CD4-positive, alpha-beta memory T cell (primary cell): ENCODE measurements at regions of chr10 and their contacts with region 1.

Region 1: DNA sequence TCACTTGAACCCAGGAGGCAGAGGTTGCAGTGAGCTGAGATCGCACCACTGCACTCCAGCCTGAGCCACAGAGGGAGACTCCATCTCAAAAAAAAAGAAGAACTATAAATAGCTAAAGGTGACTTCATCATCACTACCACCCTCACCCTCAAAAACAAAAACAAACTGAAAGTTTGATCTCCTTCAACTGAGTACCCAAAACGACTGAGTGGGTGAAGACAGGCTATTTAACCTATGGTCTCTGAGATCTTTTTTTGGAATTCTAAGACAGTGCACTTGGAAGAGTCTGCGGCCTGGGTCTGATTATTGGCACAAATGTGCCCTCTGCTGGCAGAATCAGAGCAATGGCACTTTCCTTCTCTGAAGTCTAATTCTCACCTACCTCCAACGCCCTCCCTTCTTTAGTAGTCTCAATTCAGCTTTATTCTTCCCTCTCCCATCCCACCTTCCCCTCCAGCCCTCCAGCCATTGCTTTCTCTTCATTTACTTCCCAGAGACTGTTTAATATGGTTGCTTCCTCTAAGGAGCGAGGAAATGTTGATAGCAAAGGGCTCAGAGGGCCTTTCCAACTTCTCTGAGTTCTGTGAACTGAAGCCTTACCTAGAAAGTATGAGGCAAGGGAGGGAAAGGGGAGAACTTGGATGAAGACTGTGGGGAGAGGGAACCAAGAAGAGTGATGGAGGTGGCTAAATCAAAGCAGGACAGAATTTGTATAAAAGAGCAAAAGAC is 2.9 kb upstream of the MYOZ1 start:
- DNase-seq: peak; percentile 49 to 65 (median 63)
- H3K4me3 ChIP-seq: no peak overlapping the region
- H3K4me3 Mint-ChIP-seq: peak overlapping the region in 3 of 8 donors; percentile 7 to 26 (median 21)
- H3K27ac ChIP-seq: no peak overlapping the region
- H3K27ac Mint-ChIP-seq: peak overlapping the region; percentile 3 to 82 (median 49)
- H3K4me1 ChIP-seq: no peaks in the 10 kb centered on the region
- H3K4me1 Mint-ChIP-seq: peaks cover 3 to 8% (median 7%) of the 10 kb centered on the region in 4 donors
- H3K27me3 ChIP-seq: no peaks in the 10 kb centered on the region
- H3K27me3 Mint-ChIP-seq: peaks cover 3 to 14% of the 10 kb centered on the region in 2 donors

Region 2: GRCh38 chr10:73263948-73264347 is 380.2 kb before region 1 on chr10:
- CTCF ChIA-PET with region 1: interaction called, 5 read pairs
- POLR2A ChIA-PET with region 1: no interaction called
- intact Hi-C with region 1: loop called (anchors 1 kb)
- DNase-seq: peak in 3 of 5 donors; percentile 6 to 12 (median 8)
- H3K4me3 ChIP-seq: no peak overlapping the region
- H3K4me3 Mint-ChIP-seq: no peak overlapping the region
- H3K27ac ChIP-seq: no peak overlapping the region
- H3K27ac Mint-ChIP-seq: peak overlapping the region in 1 of 7 donors; percentile 66
- H3K4me1 ChIP-seq: no peaks in the 10 kb centered on the region
- H3K4me1 Mint-ChIP-seq: peaks cover 0 to 3% (median 0%) of the 10 kb centered on the region in 4 donors
- H3K27me3 ChIP-seq: no peaks in the 10 kb centered on the region
- H3K27me3 Mint-ChIP-seq: no peaks in the 10 kb centered on the region

Region 3: GRCh38 chr10:73529089-73529832 is 114.9 kb before region 1 on chr10:
- CTCF ChIA-PET with region 1: interaction called, 312 read pairs
- POLR2A ChIA-PET with region 1: no interaction called
- intact Hi-C with region 1: loop called (anchors 1 kb)
- DNase-seq: peak; percentile 57 to 77 (median 72)
- H3K4me3 ChIP-seq: no peak overlapping the region
- H3K4me3 Mint-ChIP-seq: no peak overlapping the region
- H3K27ac ChIP-seq: no peak overlapping the region
- H3K27ac Mint-ChIP-seq: no peak overlapping the region
- H3K4me1 ChIP-seq: no peaks in the 10 kb centered on the region
- H3K4me1 Mint-ChIP-seq: no peaks in the 10 kb centered on the region
- H3K27me3 ChIP-seq: no peaks in the 10 kb centered on the region
- H3K27me3 Mint-ChIP-seq: no peaks in the 10 kb centered on the region